Posterior vena cava (tissue), 2 donors: ENCODE measurements at regions of chr2 and their contacts with region 1.

Region 1: GRCh38 chr2:12931186-12931844 is 214.6 kb downstream of the TRIB2 start:
- DNase-seq: no peak

Region 2: DNA sequence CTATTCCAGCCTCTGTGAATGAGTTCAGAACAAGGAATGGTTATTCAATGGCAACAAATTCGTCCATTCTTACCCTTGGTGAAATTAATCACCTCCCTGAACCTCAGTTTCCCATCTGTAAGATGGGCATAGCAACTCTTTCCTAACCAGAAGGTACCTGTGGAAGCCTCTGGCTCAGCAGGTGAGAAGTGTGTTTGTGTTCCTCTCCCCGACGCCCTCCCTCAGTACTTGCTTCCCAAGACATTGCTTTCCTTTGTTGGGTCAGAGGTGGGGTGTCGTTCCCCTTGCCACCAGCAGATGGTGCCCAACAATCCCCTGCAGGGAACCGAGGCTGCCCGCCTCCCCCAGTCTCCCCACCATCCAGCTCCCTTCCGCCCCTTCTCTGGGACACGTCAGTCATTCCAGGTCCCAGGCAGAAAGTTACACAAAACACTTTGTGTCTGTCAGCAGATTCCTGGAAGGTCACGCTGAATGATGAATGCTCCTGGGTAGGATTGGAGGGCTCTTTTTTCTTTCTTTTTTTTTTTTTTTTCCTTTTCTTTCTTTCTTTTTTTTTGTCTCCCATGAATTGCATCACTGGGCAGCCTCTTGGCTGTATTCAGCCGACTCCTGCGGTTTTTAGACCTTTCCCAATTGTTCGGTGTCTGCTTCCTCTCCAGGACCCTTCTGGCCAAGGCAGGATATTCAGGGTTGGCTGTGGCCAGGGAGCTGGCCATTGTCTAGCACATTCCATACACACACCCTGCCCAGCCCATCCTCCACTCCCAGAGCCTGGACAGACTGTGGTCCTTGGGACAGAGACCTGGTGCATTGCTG is 1067.6 kb before region 1 on chr2:
- intact Hi-C with region 1: loop called in 1 of 2 experiments (anchors 10 kb)
- DNase-seq: peak; percentile 94

Region 3: DNA sequence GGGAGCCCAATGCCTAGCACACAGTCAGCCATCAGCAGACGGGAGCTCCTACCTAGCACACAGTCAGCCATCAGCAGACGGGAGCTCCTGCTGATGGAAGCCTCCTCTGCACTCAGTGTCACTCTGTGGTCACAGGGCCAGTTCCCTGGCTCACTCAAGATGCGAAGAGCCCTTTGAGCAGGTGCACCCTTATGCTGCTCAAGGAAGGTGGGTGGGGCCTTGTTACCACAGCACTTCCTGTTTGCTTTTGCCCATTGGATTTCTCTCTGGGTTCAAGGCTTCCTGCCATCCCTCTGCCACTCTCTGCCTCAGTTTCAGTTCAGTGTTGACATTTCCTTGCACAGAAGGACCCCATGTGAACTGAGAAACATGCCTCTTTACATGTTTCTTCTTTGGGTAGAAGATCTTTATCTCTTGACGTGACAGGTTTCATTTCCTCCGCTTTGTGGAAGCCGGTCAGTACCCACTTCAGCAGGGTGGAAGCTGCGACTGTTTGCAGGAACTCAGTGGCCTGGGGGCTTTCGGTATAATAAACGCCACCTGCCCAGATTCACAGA is 203.0 kb before region 1 on chr2:
- intact Hi-C with region 1: loop called (anchors 10 kb)
- DNase-seq: peak; percentile 50

Region 4: DNA sequence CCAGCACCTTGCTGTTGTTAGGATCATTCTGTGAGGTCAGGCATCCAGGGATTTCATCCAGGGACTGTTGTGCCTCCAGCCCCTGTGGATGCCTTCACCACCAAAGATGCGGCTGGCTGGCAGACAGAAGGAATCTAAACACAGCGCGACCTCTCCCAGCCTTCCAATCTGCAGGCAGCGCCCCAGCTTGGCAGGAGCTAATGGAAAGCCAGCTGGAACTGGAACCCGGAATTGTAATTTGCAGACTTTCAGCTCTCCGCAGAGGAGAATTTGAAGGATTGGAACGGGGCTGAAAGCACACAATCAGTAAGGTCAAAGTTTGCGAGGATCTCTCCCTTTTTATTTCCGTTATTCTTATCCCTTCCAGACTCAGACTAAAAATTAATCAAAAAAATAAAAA is 86.8 kb before region 1 on chr2:
- intact Hi-C with region 1: no loop called
- DNase-seq: no peak